PC-9 (cell line): ENCODE measurements at regions of chr16 and their contacts with region 1.

Region 1: GRCh38 chr16:84699712-84700445 is at the start of gene USP10:
- DNase-seq: peak in 1 of 2 experiments; percentile 86
- H3K4me3 ChIP-seq: peak within 1 kb of the TSS; percentile 93
- H3K27ac ChIP-seq: no peak within 1 kb of the TSS
- H3K4me1 ChIP-seq: peaks cover 29% of the 10 kb centered on the region
- H3K27me3 ChIP-seq: no peaks in the 10 kb centered on the region
- CTCF ChIP-seq: no peak
- total RNA-seq, gene USP10: 86.3 and 109 TPM in 2 replicates

Region 2: GRCh38 chr16:84537491-84538151 is 162.3 kb before region 1 on chr16:
- CTCF ChIA-PET with region 1: no interaction called
- POLR2A ChIA-PET with region 1: no interaction called
- intact Hi-C with region 1: no loop called
- DNase-seq: no peak
- H3K4me3 ChIP-seq: no peak overlapping the region
- H3K27ac ChIP-seq: no peak overlapping the region
- H3K4me1 ChIP-seq: no peaks in the 10 kb centered on the region
- H3K27me3 ChIP-seq: peaks cover 4% of the 10 kb centered on the region; the same call in 1 of the 2 replicates
- CTCF ChIP-seq: no peak

Region 3: GRCh38 chr16:84647828-84648594 is 51.9 kb before region 1 on chr16 and contains the start of gene KLHL36:
- CTCF ChIA-PET with region 1: interaction called, 10 read pairs
- POLR2A ChIA-PET with region 1: no interaction called
- intact Hi-C with region 1: no loop called
- DNase-seq: peak in 1 of 2 experiments; percentile 57
- H3K4me3 ChIP-seq: peak within 1 kb of the TSS; percentile 98
- H3K27ac ChIP-seq: no peak within 1 kb of the TSS
- H3K4me1 ChIP-seq: peaks cover 18% of the 10 kb centered on the region
- H3K27me3 ChIP-seq: no peaks in the 10 kb centered on the region
- CTCF ChIP-seq: no peak
- total RNA-seq, gene KLHL36: 73.8 and 81.9 TPM in 2 replicates

Region 4: GRCh38 chr16:84663433-84664101 is 36.3 kb before region 1 on chr16:
- CTCF ChIA-PET with region 1: no interaction called
- POLR2A ChIA-PET with region 1: interaction called, 24 read pairs
- intact Hi-C with region 1: no loop called
- DNase-seq: no peak
- H3K4me3 ChIP-seq: no peak overlapping the region
- H3K27ac ChIP-seq: no peak overlapping the region
- H3K4me1 ChIP-seq: no peaks in the 10 kb centered on the region
- H3K27me3 ChIP-seq: no peaks in the 10 kb centered on the region
- CTCF ChIP-seq: no peak

Region 5: DNA sequence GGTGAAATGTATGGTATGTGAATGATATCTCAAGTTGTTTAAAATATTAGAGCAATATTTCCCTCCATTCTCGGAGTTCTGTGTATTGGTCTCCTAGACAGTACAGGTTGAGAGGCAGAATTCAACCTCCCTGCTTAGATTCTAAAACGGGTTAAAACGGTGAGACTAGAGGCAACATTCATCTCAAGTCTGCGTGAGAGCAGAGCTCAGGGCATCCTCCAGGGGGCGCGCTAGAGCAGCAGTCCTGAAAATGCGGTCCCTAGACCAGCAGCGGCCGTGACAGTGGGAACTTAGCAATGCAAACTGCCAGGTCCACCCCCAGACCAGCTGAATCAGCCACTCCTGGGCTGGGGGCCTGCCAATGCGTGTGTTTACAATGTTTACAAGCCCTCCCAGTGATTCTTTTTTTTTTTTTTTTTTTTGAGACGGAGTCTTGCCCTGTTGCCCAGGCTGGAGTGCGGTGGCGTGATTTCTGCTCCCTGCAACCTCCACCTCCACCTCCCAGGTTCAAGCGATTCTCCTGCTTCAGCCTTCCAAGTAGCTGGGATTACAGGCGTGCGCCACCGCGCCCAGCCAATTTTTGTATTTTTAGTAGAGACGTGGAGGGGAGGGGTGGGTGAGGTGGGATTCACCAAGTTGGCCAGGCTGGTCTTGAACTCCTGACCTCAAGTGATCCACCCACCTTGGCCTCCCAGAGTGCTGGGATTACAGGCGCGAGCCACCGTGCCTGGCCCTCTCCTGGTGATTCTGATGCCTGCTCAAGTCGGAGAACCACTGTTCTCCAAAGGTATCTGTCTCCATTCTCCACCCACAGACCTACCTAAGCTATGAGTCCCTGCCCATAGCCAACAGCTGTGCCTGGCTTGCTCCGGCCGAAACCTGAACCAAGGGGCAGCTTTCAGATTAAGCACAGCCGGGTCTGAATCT is 27.3 kb before region 1 on chr16:
- CTCF ChIA-PET with region 1: interaction called, 14 read pairs
- POLR2A ChIA-PET with region 1: no interaction called
- intact Hi-C with region 1: no loop called
- DNase-seq: peak in 1 of 2 experiments; percentile 68
- H3K4me3 ChIP-seq: no peak overlapping the region
- H3K27ac ChIP-seq: no peak overlapping the region
- H3K4me1 ChIP-seq: peaks cover 15% of the 10 kb centered on the region
- H3K27me3 ChIP-seq: no peaks in the 10 kb centered on the region
- CTCF ChIP-seq: peak; percentile 86